Heart left ventricle (tissue), 16 donors: ENCODE measurements at regions of chr7 and their contacts with region 1.

Region 1: GRCh38 chr7:139023076-139023475 is 12.8 kb downstream of the ZC3HAV1L start:
- DNase-seq: no peak
- ATAC-seq: no peak
- H3K4me3 ChIP-seq: no peak overlapping the region
- H3K27ac ChIP-seq: no peak overlapping the region
- H3K4me1 ChIP-seq: no peaks in the 10 kb centered on the region
- H3K27me3 ChIP-seq: no peaks in the 10 kb centered on the region
- CTCF ChIP-seq: no peak
- POLR2A ChIP-seq: no peak

Region 2: DNA sequence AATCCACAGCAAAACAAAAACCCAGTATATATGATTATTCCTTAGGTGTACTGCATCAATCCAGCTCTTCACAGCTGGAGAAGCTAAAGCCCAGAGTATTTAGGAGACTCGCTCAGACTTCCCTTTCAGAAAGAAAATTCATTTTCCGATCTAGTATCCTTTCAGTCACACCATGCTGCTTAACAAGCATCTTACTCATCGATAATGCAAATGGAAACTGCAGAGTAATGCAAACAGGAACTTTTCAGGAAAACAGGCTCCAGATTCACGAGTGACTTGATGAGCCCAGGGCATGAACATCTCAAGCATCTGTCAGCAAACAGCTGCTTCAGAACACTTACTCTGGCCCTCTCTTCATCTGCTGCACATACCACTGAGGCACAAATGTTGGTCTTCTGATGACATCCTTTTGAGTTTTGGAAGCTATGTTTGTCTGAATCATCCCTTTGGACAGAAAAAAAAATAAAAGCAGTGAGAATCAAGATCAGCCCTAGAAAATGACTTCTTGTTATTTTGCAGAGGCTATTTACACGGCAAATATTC is 37.7 kb after region 1 on chr7:
- intact Hi-C with region 1: loop called in 2 of 10 experiments (anchors 5 kb)
- DNase-seq: no peak
- ATAC-seq: no peak
- H3K4me3 ChIP-seq: no peak overlapping the region
- H3K27ac ChIP-seq: peak overlapping the region in 10 of 12 donors; percentile 36 to 89 (median 55)
- H3K4me1 ChIP-seq: peaks cover 0 to 32% (median 10%) of the 10 kb centered on the region in 12 donors
- H3K27me3 ChIP-seq: no peaks in the 10 kb centered on the region
- CTCF ChIP-seq: no peak
- POLR2A ChIP-seq: no peak

Region 3: DNA sequence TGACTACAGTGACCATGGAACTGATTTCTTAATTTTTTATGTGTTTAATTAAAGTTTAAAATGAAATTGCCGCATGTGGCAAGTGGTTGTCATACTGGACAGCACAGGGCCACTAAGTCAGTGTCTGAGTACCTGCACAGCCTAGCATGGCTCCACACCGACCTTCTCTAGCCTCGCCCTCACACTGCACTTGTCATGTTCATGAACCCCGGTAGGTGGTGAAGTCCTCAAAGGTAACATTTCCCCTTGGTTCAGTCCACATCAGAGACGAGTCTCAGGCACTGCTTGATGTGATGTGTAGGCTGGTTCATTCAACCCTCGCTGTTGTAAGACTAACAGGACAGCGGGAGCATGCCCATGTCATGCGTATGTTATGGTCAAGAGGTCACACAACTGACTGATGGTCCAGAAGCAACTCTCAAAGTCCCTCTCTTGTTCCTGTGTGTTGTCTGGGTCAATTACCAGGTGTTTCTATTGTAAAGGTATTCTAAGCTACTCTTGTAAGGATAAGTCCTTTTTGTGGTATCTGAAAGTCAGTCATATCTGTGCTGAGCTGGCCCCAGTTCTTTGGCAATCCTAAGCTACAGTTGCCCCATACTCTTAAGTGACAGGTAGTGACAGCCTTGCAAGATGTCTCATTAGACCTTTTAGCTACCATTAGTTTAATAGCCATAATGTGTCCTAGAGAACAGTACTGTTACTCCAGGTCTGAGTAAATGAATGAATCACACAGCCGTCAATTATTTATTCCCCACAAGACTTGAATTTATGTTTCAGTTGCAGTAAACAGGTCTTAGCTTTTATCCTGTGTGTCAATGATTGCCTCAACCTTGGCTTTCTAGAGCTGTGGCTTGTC is 45.7 kb after region 1 on chr7:
- intact Hi-C with region 1: loop called in 2 of 10 experiments (anchors 5 kb)
- DNase-seq: no peak
- ATAC-seq: no peak
- H3K4me3 ChIP-seq: no peak overlapping the region
- H3K27ac ChIP-seq: no peak overlapping the region
- H3K4me1 ChIP-seq: peaks cover 0 to 23% (median 0%) of the 10 kb centered on the region in 12 donors
- H3K27me3 ChIP-seq: no peaks in the 10 kb centered on the region
- CTCF ChIP-seq: no peak
- POLR2A ChIP-seq: no peak

Region 4: DNA sequence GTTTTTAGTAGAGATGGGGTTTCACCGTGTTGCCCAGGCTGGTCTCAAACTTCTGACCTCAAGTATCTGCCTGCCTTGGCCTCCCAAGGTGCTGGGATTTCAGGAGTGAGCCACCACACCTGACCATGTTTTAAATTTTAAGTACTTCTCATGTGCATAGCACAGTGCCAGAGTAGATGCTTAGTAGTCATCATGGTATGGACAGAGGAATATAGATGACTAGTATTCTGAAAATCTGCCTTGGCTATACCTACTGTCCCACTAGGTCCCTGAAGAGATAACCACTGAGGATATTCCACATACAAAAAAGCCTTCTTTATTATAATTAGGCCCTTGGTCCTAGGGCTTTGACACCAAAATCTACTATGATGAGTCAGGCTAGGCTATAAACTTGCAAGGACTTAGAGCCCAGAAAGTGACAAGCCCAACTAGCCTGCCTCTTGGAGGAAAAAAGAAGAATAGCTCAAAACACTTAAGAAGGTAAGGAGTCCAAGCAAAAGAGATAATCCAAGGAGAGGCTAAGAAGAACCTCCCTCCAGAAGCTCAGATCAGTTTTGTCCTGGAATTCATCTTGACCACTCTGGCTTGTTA is 370.6 kb after region 1 on chr7:
- intact Hi-C with region 1: no loop called
- DNase-seq: no peak
- ATAC-seq: no peak
- H3K4me3 ChIP-seq: no peak overlapping the region
- H3K27ac ChIP-seq: no peak overlapping the region
- H3K4me1 ChIP-seq: peaks cover 0 to 26% (median 2%) of the 10 kb centered on the region in 12 donors
- H3K27me3 ChIP-seq: no peaks in the 10 kb centered on the region
- CTCF ChIP-seq: no peak
- POLR2A ChIP-seq: no peak